ENCODE measurements at regions of chr10 and their contacts with region 1.

Region 1: DNA sequence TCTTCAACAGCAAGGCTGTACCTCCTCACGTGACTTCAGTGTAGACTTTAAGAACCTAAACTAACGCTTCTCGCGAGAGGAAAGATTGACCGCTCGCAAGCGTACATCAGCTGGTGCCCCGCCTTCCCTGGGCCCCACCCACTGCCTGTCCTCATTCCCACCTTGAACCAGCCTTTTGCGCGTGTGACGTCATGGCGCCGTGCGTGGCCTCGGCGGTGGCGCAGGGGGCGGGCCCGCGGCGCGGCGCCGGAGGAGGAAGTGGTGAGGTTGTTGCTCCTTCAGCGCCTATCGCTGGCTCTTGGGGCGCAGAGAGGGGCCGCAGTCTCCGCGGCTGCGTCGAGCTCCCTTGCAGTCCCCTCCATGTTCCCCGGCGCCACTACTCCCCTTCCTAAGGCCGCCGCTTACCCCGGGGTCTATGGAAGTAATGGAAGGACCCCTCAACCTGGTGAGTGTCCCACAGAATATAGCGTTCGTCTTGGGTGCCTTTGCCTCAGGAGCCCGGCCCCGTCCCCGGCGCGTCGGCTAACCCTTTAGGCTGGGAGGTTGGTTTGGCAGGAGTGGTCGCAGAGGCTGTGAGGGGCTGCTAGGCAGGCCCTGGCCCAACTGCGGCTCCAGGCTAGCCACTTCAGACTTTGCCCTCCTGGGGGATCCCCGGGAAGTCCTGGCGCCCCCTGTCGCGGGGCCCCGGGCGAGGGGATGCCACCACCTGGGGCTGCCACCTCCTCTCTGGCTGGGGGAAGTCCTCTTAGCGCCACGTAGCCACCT is at the start of gene NRBF2:
- DNase-seq: peak; percentile 97
- ATAC-seq: peak; percentile 88
- H3K4me3 Mint-ChIP-seq: peak within 1 kb of the TSS; percentile 93
- H3K27ac Mint-ChIP-seq: peak within 1 kb of the TSS; percentile 92
- H3K4me1 Mint-ChIP-seq: peaks cover 44% of the 10 kb centered on the region
- H3K27me3 Mint-ChIP-seq: no peaks in the 10 kb centered on the region
- CTCF ChIP-seq: no peak
- total RNA-seq, gene NRBF2: 23.8 and 26.9 TPM in 2 replicates

Region 2: GRCh38 chr10:61896854-61897661 is 1236.2 kb before region 1 on chr10:
- CTCF ChIA-PET with region 1: no interaction called
- POLR2A ChIA-PET with region 1: no interaction called
- intact Hi-C with region 1: loop called (anchors 1 kb)
- DNase-seq: peak; percentile 43
- ATAC-seq: peak; percentile 71
- H3K4me3 Mint-ChIP-seq: peak overlapping the region; percentile 97
- H3K27ac Mint-ChIP-seq: peak overlapping the region; percentile 98
- H3K4me1 Mint-ChIP-seq: peaks cover 37% of the 10 kb centered on the region
- H3K27me3 Mint-ChIP-seq: no peaks in the 10 kb centered on the region
- CTCF ChIP-seq: no peak

Region 3: GRCh38 chr10:62637249-62638061 is 495.8 kb before region 1 on chr10:
- CTCF ChIA-PET with region 1: no interaction called
- POLR2A ChIA-PET with region 1: interaction called, 10 read pairs
- intact Hi-C with region 1: no loop called
- DNase-seq: no peak
- ATAC-seq: peak; percentile 71
- H3K4me3 Mint-ChIP-seq: no peak overlapping the region
- H3K27ac Mint-ChIP-seq: no peak overlapping the region
- H3K4me1 Mint-ChIP-seq: peaks cover 38% of the 10 kb centered on the region
- H3K27me3 Mint-ChIP-seq: no peaks in the 10 kb centered on the region
- CTCF ChIP-seq: no peak

Region 4: DNA sequence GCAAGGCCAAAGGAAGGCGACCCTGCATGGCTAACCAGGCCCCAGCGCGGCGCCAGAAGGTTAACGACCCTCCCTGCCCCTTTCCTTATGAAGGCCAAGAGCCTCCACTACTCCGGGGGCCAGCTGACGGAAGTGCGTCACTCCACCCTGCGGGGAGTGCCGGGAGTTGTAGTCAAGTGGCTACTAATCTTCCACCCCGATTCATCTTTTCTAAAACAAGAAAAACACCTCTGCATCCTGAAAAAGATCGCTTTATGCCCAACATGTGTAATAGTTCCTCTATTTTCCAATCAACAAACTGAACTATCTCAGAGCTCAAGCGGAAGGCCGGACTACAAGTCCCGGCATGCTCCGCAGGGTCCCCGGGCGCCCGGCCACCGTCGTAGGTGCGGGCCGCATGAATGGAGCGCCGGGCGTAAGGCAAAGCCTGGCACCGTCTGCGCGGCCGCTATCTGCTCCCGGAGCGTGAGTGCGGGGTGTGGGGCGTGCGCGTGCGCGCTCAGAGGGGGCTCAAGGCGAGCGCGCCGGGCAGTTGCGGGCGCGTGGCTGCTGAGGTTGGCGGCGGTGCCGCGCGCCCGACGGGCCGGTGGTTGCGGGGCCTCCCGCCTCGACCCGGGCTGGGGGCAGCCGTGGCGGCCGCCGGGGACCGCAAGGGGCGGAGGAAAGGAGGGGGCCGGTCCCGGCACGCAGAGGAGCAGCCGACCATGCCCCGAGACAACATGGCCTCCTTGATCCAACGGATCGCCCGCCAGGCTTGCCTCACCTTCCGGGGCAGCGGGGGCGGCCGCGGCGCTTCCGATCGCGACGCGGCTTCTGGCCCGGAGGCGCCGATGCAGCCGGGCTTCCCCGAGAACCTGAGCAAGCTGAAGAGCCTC is 328.6 kb before region 1 on chr10 and contains the start of gene ADO:
- CTCF ChIA-PET with region 1: no interaction called
- POLR2A ChIA-PET with region 1: no interaction called
- intact Hi-C with region 1: loop called (anchors 1 kb)
- DNase-seq: peak; percentile 77
- ATAC-seq: peak; percentile 87
- H3K4me3 Mint-ChIP-seq: peak within 1 kb of the TSS; percentile 95
- H3K27ac Mint-ChIP-seq: peak within 1 kb of the TSS; percentile 99
- H3K4me1 Mint-ChIP-seq: peaks cover 41% of the 10 kb centered on the region
- H3K27me3 Mint-ChIP-seq: no peaks in the 10 kb centered on the region
- CTCF ChIP-seq: no peak
- total RNA-seq, gene ADO: 21.6 and 21.7 TPM in 2 replicates

Region 5: DNA sequence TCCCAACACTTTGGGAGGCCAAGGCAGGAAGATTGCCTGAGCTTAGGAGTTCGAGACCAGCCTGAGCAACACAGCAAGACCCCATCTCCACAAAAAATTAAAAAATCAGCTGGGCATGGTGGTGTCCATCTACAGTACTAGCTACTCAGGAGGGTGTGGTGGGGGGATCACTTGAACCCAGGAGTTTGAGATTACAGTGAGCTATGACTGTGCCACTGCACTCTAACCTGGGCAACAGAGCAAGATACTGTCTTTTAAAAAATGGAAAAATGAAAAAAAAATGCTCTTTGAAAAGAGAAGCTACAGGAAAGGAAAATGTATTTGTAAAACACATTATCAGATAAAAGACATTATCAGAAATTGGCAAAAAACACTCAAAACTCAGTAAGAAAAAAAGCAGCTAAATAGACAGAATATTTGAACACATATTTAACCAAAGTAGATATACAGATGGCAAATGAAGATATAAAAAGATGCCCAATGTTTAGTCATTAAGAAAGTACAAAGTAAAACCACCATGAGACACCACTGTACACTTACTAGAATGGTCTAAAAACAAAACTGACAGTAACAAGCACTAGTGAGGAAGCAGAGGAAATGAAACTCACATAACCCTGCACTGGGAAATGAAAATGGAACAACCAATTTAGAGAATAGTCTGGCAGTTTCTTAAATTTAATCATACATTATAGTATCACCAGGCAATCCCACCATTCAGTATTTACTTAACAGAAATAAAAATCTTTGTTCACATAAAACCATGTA is 40.4 kb after region 1 on chr10:
- CTCF ChIA-PET with region 1: no interaction called
- POLR2A ChIA-PET with region 1: interaction called, 4 read pairs
- intact Hi-C with region 1: loop called (anchors 1 kb)
- DNase-seq: no peak
- ATAC-seq: peak; percentile 99
- H3K4me3 Mint-ChIP-seq: peak overlapping the region; percentile 63
- H3K27ac Mint-ChIP-seq: peak overlapping the region; percentile 82
- H3K4me1 Mint-ChIP-seq: peaks cover 48% of the 10 kb centered on the region
- H3K27me3 Mint-ChIP-seq: no peaks in the 10 kb centered on the region
- CTCF ChIP-seq: no peak

Region 6: DNA sequence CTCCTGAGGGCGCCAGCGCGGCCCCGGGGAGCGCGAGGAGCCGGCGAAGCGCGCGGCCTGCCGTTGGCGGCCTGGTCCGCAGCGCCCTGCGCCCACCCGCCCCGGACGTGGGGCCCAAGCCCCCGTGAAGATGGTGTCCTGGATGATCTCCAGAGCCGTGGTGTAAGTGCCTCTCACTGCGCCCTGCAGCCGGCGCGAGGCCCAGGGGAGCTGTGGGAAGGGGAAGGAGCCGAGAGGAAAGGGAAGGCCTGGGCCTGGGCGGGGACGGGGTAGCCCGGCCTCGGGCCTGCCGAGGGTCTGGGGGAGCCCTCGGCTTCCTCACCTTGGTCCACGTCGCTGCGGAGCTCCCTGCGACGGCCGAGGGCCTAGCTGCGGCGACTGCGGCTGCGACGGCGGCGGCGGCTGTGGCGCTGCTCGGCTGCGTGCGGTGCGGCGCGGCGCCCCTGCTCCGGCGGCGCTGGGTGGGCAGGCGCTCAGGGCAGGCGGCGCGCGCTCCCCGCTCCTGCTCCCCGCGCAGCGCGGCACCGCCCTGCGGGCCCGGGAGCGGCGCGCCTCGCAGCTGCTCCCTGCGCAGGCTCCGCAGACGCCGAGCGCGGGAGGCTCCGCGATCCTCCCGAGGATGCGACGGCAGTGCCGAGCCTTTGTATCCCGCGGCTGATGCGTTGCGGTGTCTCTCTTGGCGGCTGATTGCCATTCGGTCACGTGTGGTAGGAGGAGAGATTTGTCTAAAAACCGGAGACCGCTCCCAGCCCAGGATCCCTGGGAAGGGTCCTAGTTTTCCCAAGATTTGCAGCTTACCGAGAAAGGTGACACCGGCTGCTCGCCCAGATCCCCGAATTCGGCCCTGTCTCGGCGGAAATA is 388.4 kb after region 1 on chr10:
- CTCF ChIA-PET with region 1: no interaction called
- POLR2A ChIA-PET with region 1: no interaction called
- intact Hi-C with region 1: loop called (anchors 1 kb)
- DNase-seq: peak; percentile 72
- ATAC-seq: peak; percentile 70
- H3K4me3 Mint-ChIP-seq: peak overlapping the region; percentile 86
- H3K27ac Mint-ChIP-seq: peak overlapping the region; percentile 72
- H3K4me1 Mint-ChIP-seq: peaks cover 47% of the 10 kb centered on the region
- H3K27me3 Mint-ChIP-seq: no peaks in the 10 kb centered on the region
- CTCF ChIP-seq: no peak

Measured in activated B cell treated with CpG ODN at 0.5 μM for 24 hours (primary cell).